ENCODE measurements at regions of chr1 and their contacts with region 1.

Region 1: DNA sequence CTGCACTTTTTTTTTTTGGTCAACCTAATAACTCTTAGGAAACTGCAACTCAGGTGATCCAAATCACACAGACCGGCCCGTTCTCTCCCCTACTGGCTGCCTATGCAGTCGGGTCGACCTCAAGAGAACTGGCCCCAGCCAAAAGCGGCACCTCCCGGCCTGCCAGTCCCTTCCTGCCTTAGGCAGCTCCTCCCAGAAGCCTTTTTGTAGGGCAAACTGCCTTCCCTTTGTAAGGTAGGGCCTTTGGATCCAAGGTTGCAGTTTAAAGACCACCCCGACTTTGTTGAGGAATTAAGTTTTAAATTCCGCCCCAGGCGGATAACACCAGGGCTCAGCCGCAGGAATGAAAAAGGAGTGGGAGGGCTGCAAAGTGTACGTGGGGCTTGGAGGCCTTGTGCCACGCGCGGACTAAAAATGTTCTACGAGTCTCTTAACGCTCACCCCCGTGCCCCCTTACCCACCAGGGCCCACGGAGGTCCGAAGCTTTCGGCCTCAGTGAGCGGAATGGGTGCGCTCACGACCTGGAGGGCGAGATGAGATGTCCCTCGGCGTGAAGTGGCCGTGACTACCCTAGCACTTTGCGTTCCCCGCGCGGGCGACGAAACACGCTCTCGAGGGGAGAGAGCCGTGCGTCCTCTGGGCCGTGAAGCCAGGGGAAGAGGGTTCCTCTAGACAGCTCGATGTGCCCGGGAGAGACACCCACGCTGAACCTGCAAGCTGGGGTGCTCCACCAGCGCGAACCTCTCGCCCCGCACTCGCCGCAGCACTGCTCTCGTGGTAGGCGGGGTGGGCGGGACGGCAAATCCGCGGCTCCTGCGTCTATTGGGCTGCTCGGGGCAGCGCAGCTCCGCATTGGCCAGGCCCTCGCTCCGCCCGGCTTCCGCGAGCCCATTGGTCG is 489 bp upstream of the ST3GAL3 start:
- DNase-seq: peak; percentile 69 to 94
- H3K4me3 ChIP-seq: peak overlapping the region; percentile 96 to 97
- H3K27ac ChIP-seq: peak overlapping the region in 1 of 2 donors; percentile 70
- H3K4me1 ChIP-seq: peaks cover 0 to 9% of the 10 kb centered on the region in 2 donors
- H3K27me3 ChIP-seq: no peaks in the 10 kb centered on the region
- CTCF ChIP-seq: no peak

Region 2: GRCh38 chr1:43454266-43455011 is 252.4 kb before region 1 on chr1:
- intact Hi-C with region 1: loop called (anchors 5 kb)
- DNase-seq: peak in 1 of 2 donors; percentile 88
- H3K4me3 ChIP-seq: peak overlapping the region; percentile 66 to 77
- H3K27ac ChIP-seq: peak overlapping the region; percentile 88 to 94
- H3K4me1 ChIP-seq: peaks cover 0 to 5% of the 10 kb centered on the region in 2 donors
- H3K27me3 ChIP-seq: no peaks in the 10 kb centered on the region
- CTCF ChIP-seq: no peak